HEK293 (cell line): ENCODE measurements at regions of chr18 and their contacts with region 1.

Region 1: DNA sequence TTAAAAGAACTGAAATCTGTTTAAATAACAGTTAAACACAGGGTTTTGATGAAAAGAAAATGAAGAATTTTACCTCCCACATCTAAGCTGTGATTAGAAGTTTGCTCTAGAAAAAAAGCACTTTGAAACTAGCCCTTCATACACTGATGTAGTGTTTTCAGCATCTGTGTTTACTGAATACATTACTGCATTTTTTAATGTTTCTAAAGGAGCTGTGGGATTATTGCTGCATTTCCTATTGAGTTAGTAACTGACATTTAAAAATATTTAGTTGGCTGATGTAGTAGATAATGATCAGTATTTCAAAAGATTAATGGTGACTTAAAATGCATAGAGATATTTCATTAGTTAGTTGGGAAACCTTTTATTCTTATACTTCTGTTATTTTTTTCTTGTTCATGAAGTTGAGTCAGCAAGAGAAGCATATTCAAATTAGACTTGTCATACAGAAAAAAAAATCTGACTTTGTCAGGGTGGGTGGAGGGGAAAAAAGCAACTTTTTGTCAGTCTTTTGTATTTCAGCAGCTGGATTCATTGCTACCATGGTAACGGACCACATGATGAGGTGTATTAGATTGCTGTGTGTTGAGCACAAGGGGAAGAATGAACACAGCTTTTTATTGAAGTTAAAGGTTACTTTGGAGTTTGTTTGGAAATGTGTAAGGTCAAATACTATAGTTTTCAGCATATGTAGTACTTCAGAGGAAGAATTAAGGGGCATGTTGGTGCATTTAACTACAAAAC is at the start of gene DTNA:
- H3K4me3 ChIP-seq: no peak within 1 kb of the TSS; the same call in 1 of the 2 replicates
- H3K27ac ChIP-seq: no peak within 1 kb of the TSS
- H3K4me1 ChIP-seq: peaks cover 22% of the 10 kb centered on the region
- CTCF ChIP-seq: no peak

Region 2: DNA sequence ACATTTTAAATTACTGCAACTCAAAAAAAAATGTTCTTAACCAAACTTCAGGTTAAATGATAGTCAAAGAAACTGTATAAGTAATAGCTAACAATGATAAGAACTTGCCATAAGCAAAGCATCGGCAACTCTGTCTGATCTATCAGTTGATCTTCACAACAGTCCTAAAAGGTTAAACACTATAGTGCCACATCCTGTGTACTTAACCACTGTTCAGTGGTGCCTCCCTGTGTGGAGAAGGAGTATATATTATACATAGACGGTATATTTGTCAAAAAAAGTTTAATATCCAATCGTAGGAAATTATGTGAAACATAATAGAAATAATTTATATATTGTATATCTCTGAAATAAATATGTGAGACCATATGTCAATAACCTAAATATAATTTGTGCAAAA is 13.3 kb after region 1 on chr18:
- CTCF ChIA-PET with region 1: interaction called, 10 read pairs
- POLR2A ChIA-PET with region 1: no interaction called
- H3K4me3 ChIP-seq: no peak overlapping the region
- H3K27ac ChIP-seq: no peak overlapping the region
- H3K4me1 ChIP-seq: no peaks in the 10 kb centered on the region
- CTCF ChIP-seq: no peak